ENCODE measurements at regions of chrX and their contacts with region 1.

Region 1: GRCh38 chrX:153667956-153668396 is 5.6 kb downstream of the PNCK start:
- DNase-seq: peak; percentile 57
- H3K4me3 Mint-ChIP-seq: peak overlapping the region; percentile 79
- H3K27ac Mint-ChIP-seq: no peak overlapping the region
- H3K4me1 Mint-ChIP-seq: peaks cover 7% of the 10 kb centered on the region
- H3K27me3 Mint-ChIP-seq: peaks cover 8% of the 10 kb centered on the region

Region 2: GRCh38 chrX:153032397-153033118 is 635.4 kb before region 1 on chrX:
- intact Hi-C with region 1: loop called (anchors 2 kb)
- DNase-seq: peak; percentile 52
- H3K4me3 Mint-ChIP-seq: peak overlapping the region; percentile 78
- H3K27ac Mint-ChIP-seq: peak overlapping the region; percentile 77
- H3K4me1 Mint-ChIP-seq: no peaks in the 10 kb centered on the region
- H3K27me3 Mint-ChIP-seq: no peaks in the 10 kb centered on the region

Region 3: DNA sequence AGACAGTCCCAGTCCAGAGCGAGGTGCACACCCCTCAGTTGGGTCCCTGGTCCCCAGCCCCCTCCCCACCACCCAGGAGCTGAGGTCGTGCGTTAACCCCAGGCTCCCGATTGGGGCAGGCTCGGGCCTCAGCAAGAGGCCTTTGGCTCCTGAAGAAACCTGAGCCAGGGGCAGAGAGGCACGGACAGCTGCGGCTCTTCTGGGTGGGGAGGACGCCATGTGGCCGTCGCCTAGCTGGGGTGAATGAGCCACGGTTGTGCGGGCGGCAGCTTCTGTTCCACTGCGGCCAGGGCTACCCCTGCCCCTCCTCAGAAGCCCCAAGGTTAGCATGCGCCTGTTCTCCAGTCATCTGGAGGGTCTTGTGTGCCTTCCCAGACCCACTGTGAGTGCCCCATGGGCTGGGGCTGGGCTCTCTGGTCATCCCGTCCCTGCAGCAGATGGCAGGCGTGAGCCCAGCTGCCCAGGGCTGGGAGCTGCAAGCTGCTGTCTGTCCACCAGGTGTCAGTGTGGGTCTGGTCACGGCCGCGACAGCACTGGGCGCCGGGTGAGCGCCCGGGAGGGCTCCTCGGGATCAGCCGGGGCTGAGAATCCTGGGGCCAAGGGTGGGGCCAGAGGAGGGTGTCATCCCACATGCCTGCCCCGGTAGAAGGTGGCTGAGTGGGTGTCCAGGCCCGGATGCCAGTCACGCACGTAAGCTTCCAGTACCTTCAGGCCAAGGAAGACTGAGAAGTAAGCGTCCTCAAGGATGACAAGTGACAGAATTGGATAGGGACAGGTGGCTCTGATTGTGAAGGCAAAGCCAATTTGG is 128.6 kb before region 1 on chrX:
- intact Hi-C with region 1: loop called (anchors 1 kb)
- DNase-seq: peak; percentile 29
- H3K4me3 Mint-ChIP-seq: no peak overlapping the region
- H3K27ac Mint-ChIP-seq: no peak overlapping the region
- H3K4me1 Mint-ChIP-seq: no peaks in the 10 kb centered on the region
- H3K27me3 Mint-ChIP-seq: no peaks in the 10 kb centered on the region

Region 4: DNA sequence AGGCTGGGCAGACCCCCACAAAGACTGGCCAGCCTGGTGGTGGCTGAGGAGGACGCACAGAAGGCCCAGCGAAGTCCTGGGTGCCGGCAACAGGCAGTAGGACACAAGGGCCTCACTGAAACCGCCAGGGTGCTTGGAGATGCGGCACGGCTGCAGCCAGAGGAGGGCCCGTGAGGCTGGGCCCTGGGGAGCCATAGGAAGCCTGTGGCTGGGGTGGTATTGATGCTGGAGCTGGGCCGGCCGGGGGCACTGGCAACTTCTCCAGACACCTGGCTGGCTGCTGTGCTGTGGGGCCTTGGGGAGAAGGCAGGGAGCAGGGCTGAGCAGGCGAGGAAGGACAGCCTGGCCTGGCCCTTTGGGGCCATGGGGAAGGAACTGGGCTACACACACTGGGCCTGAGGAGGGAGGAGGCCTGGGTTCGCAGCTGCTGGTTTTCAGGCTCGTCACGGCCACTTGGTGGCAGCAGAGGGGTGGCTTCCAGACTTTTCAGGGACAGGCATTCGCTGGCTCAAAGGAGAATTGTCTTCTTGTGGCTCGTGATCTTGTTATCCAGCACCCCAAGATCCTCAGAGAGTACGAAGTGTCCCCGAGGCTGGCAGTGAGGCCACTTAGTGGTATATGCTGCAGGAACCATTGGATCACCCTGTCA is 113.3 kb before region 1 on chrX:
- intact Hi-C with region 1: loop called (anchors 1 kb)
- DNase-seq: peak; percentile 35
- H3K4me3 Mint-ChIP-seq: no peak overlapping the region
- H3K27ac Mint-ChIP-seq: no peak overlapping the region
- H3K4me1 Mint-ChIP-seq: no peaks in the 10 kb centered on the region
- H3K27me3 Mint-ChIP-seq: peaks cover 1% of the 10 kb centered on the region

Region 5: DNA sequence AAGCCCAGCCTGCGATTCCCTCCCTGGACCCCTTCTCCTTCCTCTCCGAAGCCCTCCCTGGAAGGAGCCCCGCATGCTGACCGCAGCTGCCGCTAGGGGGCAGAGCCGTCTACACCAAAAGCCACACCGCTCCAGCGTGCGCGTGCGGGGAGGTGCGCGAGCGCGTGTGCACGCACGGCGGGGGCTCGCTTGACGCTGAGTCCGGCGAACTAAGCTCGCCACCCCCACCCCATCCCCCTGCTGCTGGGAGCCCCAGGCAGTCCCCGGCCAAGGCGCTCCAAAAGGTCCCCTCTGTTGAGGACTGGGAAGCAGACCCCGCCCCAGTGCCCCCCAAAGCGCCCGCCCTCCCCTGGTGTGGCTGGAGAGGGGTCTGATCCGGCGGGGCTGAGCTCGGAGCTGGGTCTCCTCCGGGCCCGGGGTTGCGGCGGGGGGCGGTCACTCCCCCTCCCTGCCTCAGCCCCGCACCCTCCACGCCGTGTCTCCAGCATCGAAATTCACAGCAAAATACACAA is 58.0 kb before region 1 on chrX:
- intact Hi-C with region 1: loop called (anchors 2 kb)
- DNase-seq: peak; percentile 58
- H3K4me3 Mint-ChIP-seq: peak overlapping the region; percentile 77
- H3K27ac Mint-ChIP-seq: peak overlapping the region; percentile 75
- H3K4me1 Mint-ChIP-seq: peaks cover 10% of the 10 kb centered on the region
- H3K27me3 Mint-ChIP-seq: peaks cover 15% of the 10 kb centered on the region

Region 6: DNA sequence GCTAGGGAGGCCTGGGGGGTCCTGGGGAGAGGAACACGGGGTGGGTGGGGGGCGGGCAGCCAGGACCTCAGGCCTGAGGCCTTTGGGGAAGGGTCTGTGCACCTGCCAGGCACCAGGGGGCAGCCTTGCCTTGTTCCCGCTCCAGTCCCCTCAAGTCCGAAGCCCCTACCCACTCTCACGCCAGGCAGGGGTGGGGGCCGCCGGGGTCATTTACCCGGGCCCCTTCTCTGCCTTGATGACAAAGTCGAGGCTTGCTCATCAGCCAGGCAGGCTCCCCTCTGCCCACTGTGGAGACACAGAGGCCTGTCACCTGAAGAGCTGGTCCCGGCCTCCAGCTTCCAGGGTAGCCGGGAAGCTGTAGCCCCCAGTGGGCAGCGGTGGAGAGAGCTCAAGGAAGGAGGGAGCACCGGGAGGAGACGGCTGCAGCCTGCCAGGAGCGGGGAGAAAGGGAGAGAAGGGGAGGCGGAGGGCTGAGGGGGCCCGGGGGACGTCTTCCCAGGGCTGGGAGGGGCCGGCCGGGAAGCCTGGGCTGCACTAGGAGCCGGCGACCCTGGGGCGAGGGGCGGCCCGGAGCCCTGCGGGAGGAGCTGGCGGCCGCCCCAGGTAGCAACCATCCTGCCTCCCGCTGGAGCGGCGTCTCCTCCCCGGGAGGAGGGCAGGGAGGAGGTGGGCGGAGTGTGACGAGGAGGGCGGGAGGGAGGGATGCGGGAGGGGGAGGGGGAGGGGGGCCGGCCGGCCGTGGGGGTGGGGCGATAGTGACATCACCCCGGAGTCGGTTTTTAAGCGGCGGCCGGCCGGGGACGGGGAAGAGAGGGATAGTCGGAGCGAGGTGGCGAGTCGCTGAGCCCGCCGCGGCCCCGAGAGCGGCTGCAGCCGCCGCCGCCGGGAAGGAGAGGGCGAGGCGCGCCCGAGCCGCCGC is 19.4 kb after region 1 on chrX and contains the start of gene SLC6A8:
- intact Hi-C with region 1: no loop called
- DNase-seq: peak; percentile 6
- H3K4me3 Mint-ChIP-seq: peak within 1 kb of the TSS; percentile 66
- H3K27ac Mint-ChIP-seq: no peak within 1 kb of the TSS
- H3K4me1 Mint-ChIP-seq: no peaks in the 10 kb centered on the region
- H3K27me3 Mint-ChIP-seq: peaks cover 10% of the 10 kb centered on the region
- total RNA-seq, gene SLC6A8: 5.9 and 6.0 TPM in 2 replicates

Region 7: GRCh38 chrX:153708415-153708814 is 40.4 kb after region 1 on chrX:
- intact Hi-C with region 1: no loop called
- DNase-seq: peak; percentile 28
- H3K4me3 Mint-ChIP-seq: no peak overlapping the region
- H3K27ac Mint-ChIP-seq: no peak overlapping the region
- H3K4me1 Mint-ChIP-seq: no peaks in the 10 kb centered on the region
- H3K27me3 Mint-ChIP-seq: no peaks in the 10 kb centered on the region

Region 8: GRCh38 chrX:153763989-153764755 is 96.2 kb after region 1 on chrX and contains the start of gene PLXNB3:
- intact Hi-C with region 1: no loop called
- DNase-seq: peak; percentile 58
- H3K4me3 Mint-ChIP-seq: no peak within 1 kb of the TSS
- H3K27ac Mint-ChIP-seq: no peak within 1 kb of the TSS
- H3K4me1 Mint-ChIP-seq: peaks cover 5% of the 10 kb centered on the region
- H3K27me3 Mint-ChIP-seq: peaks cover 5% of the 10 kb centered on the region
- total RNA-seq, gene PLXNB3: 0.21 and 0.81 TPM in 2 replicates

Measured in activated T-helper 1 cell treated with anti-CD3 and anti-CD28 coated beads, Interleukin-12 subunit alpha, Interleukin-12 subunit beta, Interleukin-2, Interleukin-4 antibody, amounts not matched to agents 30 ng/mL and 10 ng/mL and 1 ng/mL, durations not matched to agents 14 hours and 24 hours and 36 hours (primary cell).